ENCODE measurements at regions of chr17 and their contacts with region 1.

Region 1: DNA sequence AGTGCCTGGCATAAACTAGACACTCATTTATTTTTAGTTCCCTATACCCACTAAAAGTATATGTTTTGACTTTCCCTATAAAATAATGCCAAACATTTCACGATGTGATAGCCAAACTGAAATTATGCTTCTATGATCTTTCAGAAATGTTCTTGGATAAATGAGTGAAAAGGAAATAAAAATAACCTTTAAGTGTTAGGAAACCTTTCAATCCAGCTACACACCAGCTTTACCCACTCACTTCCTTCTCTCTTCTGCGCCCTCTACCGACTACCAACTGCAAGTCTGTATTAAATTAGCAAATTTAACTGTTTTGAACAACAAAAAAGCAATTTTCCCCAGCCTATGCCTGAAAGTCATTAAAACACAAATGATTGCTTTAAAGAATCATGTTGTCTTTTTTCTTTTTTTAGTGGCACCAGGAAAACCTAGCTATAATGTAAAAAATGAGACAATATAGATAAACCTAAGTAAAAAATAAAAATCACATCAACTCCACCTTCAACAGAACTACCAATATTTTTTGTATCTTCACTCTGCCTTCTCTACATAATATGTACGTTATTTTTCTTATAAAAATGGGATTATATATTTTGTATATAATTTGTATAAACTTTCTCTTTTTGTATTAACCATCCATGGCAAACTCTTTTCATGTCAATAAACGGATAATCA is 13.2 kb upstream of the TMEM100 start:
- DNase-seq: peak; percentile 81
- H3K4me3 Mint-ChIP-seq: no peak overlapping the region
- H3K27ac Mint-ChIP-seq: no peak overlapping the region
- H3K4me1 Mint-ChIP-seq: peaks cover 18% of the 10 kb centered on the region
- H3K27me3 Mint-ChIP-seq: peaks cover 31% of the 10 kb centered on the region

Region 2: DNA sequence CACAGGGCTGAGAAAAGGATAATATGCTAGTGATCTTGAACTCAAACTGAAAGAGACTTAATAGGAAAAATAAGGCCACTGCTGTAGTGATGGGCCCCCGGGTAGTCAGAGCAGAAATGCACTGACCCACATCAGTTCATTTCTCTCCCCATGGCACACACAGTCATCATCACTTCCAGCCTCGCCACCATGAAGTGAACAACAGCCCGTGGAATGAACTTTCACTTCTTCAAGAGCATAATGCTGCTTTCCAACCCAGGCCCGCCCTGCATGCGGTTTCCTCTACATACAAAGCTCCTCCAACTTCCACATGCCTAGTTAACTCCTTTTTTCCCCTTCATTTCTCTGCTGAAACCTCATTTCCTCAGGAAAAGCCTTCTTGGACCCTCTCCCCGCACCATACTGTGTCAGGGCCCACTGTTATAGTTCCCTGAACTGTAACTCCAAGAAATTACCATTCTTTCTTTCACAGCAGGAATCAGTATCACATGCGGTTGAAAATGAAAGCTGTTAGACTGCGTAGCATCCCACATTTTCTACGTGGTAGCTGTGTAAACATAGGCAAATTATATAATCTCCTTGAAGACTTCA is 158.8 kb before region 1 on chr17:
- intact Hi-C with region 1: loop called (anchors 1 kb)
- DNase-seq: peak; percentile 81
- H3K4me3 Mint-ChIP-seq: no peak overlapping the region
- H3K27ac Mint-ChIP-seq: no peak overlapping the region
- H3K4me1 Mint-ChIP-seq: peaks cover 3% of the 10 kb centered on the region
- H3K27me3 Mint-ChIP-seq: peaks cover 23% of the 10 kb centered on the region

Region 3: GRCh38 chr17:55717898-55718735 is 17.8 kb before region 1 on chr17:
- intact Hi-C with region 1: no loop called
- DNase-seq: peak; percentile 87
- H3K4me3 Mint-ChIP-seq: no peak overlapping the region
- H3K27ac Mint-ChIP-seq: no peak overlapping the region
- H3K4me1 Mint-ChIP-seq: no peaks in the 10 kb centered on the region
- H3K27me3 Mint-ChIP-seq: peaks cover 23% of the 10 kb centered on the region

Region 4: GRCh38 chr17:55750750-55751657 is 15.1 kb after region 1 on chr17 and contains the start of gene PCTP:
- intact Hi-C with region 1: loop called (anchors 1 kb)
- DNase-seq: peak; percentile 97
- H3K4me3 Mint-ChIP-seq: peak within 1 kb of the TSS; percentile 80
- H3K27ac Mint-ChIP-seq: peak within 1 kb of the TSS; percentile 20
- H3K4me1 Mint-ChIP-seq: peaks cover 10% of the 10 kb centered on the region
- H3K27me3 Mint-ChIP-seq: peaks cover 24% of the 10 kb centered on the region
- total RNA-seq, gene PCTP: 5.4 and 6.4 TPM in 2 replicates

Region 5: GRCh38 chr17:55770148-55770870 is 34.4 kb after region 1 on chr17:
- intact Hi-C with region 1: no loop called
- DNase-seq: no peak
- H3K4me3 Mint-ChIP-seq: no peak overlapping the region
- H3K27ac Mint-ChIP-seq: no peak overlapping the region
- H3K4me1 Mint-ChIP-seq: no peaks in the 10 kb centered on the region
- H3K27me3 Mint-ChIP-seq: no peaks in the 10 kb centered on the region

Region 6: DNA sequence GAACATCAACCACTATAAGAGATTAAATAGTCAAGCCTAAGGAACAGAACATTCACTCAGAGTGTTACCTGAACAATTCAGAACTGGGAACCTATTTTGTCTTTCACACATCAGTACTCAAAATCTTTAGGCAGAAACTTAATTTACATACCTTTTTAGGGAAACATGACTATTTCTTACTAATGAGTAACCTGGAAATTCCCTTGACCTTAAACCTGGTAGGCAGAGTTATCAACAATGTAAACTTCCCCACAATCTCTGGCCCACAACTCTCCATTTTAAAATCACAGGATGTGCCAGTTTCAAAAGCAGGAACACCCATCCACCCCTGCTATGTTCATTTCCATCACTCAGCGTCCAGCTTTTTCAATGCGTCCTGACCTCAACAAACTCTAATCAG is 284.5 kb after region 1 on chr17:
- intact Hi-C with region 1: loop called (anchors 10 kb)
- DNase-seq: no peak
- H3K4me3 Mint-ChIP-seq: peak overlapping the region; percentile 4
- H3K27ac Mint-ChIP-seq: peak overlapping the region; percentile 58
- H3K4me1 Mint-ChIP-seq: peaks cover 26% of the 10 kb centered on the region
- H3K27me3 Mint-ChIP-seq: peaks cover 5% of the 10 kb centered on the region

Measured in activated CD4-positive, alpha-beta T cell treated with anti-CD3 and anti-CD28 coated beads, Interleukin-2, amount 10 ng/mL, durations not matched to agents 24 days and 14 days (primary cell).